HEK293 (cell line): ENCODE measurements at regions of chr6 and their contacts with region 1.

Region 1: GRCh38 chr6:73520688-73521350 is at the start of gene EEF1A1:
- H3K4me3 ChIP-seq: peak within 1 kb of the TSS; percentile 80
- H3K27ac ChIP-seq: peak within 1 kb of the TSS; percentile 94
- H3K4me1 ChIP-seq: no peaks in the 10 kb centered on the region
- CTCF ChIP-seq: peak; percentile 20; the same call in 1 of the 2 replicates

Region 2: GRCh38 chr6:73309769-73310502 is 210.9 kb before region 1 on chr6:
- CTCF ChIA-PET with region 1: no interaction called
- POLR2A ChIA-PET with region 1: no interaction called
- H3K4me3 ChIP-seq: peak overlapping the region; percentile 53
- H3K27ac ChIP-seq: peak overlapping the region; percentile 78
- H3K4me1 ChIP-seq: no peaks in the 10 kb centered on the region
- CTCF ChIP-seq: peak; percentile 96

Region 3: GRCh38 chr6:73548458-73549446 is 27.9 kb after region 1 on chr6:
- CTCF ChIA-PET with region 1: interaction called, 3 read pairs
- POLR2A ChIA-PET with region 1: interaction called, 15 read pairs
- H3K4me3 ChIP-seq: no peak overlapping the region
- H3K27ac ChIP-seq: no peak overlapping the region
- H3K4me1 ChIP-seq: no peaks in the 10 kb centered on the region
- CTCF ChIP-seq: no peak

Region 4: DNA sequence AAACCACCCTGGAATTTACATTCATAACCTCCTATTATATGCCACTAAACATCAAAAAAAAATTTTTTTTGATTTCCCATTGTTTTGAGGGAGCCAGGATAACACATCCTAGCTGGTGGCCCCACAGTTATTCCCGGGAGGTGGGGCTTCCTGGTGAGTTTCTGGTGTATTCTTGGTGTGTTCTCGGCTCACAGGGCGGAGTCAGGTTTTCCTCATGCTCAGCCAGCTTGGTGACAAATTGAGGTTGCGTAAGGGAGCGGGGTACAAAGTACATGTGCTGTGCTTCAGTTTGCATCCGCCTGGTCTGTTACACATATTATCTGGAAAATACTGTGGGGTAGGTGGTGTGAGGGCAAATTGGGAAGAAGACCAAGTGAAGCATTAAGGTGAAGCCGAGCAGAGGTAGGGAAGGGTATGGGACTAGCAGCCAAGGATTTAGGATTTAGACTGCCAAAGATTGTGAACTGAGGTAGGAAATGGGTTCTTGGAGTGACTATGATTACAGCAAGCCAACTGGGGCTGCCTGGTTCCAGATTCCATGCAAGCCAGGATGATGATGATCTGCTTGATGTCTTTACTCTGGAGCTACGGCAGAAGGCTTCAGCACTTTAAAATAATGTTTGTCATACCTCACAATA is 46.3 kb after region 1 on chr6:
- CTCF ChIA-PET with region 1: no interaction called
- POLR2A ChIA-PET with region 1: interaction called, 18 read pairs
- H3K4me3 ChIP-seq: no peak overlapping the region
- H3K27ac ChIP-seq: no peak overlapping the region
- H3K4me1 ChIP-seq: no peaks in the 10 kb centered on the region
- CTCF ChIP-seq: no peak

Region 5: DNA sequence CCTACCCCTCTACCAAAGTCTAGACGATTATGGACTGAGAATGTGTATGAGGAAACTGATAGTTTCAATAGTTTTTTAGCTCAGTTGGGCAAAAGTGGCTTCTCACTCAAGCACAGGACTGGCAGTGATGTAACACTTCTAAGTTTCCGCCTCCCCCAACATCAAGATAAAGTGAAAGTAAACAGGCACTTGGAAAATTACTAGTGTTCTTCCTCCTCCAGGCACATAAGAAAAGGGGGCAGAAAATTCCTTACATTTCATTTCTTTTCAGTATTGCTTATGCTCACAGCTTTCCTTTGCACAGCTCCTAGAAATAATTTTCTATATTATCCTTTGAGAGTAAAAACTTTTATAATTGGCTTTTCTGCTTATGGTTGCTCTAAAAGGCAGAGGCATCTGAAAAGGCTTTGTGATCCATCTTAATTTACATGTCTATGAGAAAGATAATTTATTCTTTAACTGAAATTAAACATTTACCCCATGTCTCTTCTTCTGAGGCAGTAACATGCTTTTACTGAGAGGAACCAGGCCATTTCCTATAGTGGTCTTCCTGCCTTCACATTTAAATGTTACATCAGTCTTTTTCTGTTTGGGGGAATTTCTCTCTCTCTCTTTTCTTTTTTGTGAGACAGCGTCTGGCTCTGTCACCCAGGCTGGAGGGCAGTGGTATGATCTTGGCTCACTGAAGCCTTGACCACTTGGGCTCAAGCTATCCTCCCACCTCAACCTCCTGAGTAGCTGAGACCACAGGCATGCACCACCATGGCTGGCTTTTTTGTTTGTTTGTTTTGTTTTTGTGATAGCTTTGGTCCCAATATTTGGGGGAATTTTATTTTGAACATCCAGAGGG is 65.0 kb after region 1 on chr6:
- CTCF ChIA-PET with region 1: interaction called, 3 read pairs
- POLR2A ChIA-PET with region 1: interaction called, 45 read pairs
- H3K4me3 ChIP-seq: peak overlapping the region; percentile 21
- H3K27ac ChIP-seq: peak overlapping the region; percentile 62
- H3K4me1 ChIP-seq: peaks cover 9% of the 10 kb centered on the region
- CTCF ChIP-seq: no peak

Region 6: DNA sequence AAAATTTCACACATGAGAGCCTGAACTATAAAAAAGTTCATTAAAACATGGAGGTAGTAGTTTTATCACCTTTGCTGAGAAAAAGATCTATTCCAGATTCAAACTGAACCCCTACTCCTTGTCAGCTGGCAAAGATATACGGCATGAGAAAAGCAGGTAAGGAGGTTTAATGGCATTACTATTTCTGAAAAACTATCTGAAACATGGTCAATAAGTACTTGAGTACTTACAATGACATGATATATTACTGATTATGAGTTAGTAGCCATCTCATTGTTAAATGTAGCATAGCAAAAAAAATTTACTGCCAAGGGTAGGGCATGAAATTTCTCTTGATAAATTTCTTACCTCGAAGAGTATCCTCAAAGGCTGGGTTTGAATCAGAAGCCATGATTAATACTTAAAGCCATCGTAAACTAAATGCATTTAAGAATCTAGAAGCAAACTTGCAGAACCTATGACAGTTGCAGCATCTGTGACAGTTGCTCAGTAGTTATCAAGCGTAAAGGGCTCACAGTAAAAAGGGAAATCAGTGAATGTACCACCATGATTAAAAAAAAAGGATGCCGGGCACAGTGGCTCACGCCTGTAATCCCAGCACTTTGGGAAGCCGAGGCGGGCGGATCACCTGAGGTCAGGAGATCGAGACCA is 124.2 kb after region 1 on chr6:
- CTCF ChIA-PET with region 1: interaction called, 5 read pairs
- POLR2A ChIA-PET with region 1: interaction called, 12 read pairs
- H3K4me3 ChIP-seq: peak overlapping the region; percentile 42
- H3K27ac ChIP-seq: no peak overlapping the region
- H3K4me1 ChIP-seq: no peaks in the 10 kb centered on the region
- CTCF ChIP-seq: no peak